Mammary epithelial cell (primary cell): ENCODE measurements at regions of chr6 and their contacts with region 1.

Region 1: GRCh38 chr6:17987576-17988421 is at the start of gene KIF13A:
- DNase-seq: peak; percentile 58
- H3K4me3 ChIP-seq: peak within 1 kb of the TSS; percentile 82 to 96 (median 91)
- H3K27ac ChIP-seq: peak within 1 kb of the TSS; percentile 80
- H3K4me1 ChIP-seq: peaks cover 28% of the 10 kb centered on the region
- H3K27me3 ChIP-seq: no peaks in the 10 kb centered on the region
- CTCF ChIP-seq: peak in 1 of 2 donors; percentile 22
- total RNA-seq, gene KIF13A: 71.2 to 85.5 TPM

Region 2: GRCh38 chr6:17808609-17809008 is 179.2 kb before region 1 on chr6:
- CTCF ChIA-PET with region 1: no interaction called
- dilution Hi-C with region 1: no loop called
- in situ Hi-C with region 1: no loop called
- intact Hi-C with region 1: no loop called
- DNase-seq: no peak
- H3K4me3 ChIP-seq: no peak overlapping the region
- H3K27ac ChIP-seq: no peak overlapping the region
- H3K4me1 ChIP-seq: no peaks in the 10 kb centered on the region
- H3K27me3 ChIP-seq: no peaks in the 10 kb centered on the region
- CTCF ChIP-seq: no peak

Region 3: GRCh38 chr6:17907406-17908229 is 80.2 kb before region 1 on chr6:
- CTCF ChIA-PET with region 1: no interaction called
- dilution Hi-C with region 1: no loop called
- in situ Hi-C with region 1: no loop called
- intact Hi-C with region 1: loop called (anchors 2 kb)
- DNase-seq: peak; percentile 98
- H3K4me3 ChIP-seq: no peak overlapping the region
- H3K27ac ChIP-seq: peak overlapping the region; percentile 85
- H3K4me1 ChIP-seq: peaks cover 27% of the 10 kb centered on the region
- H3K27me3 ChIP-seq: no peaks in the 10 kb centered on the region
- CTCF ChIP-seq: peak; percentile 35 to 54

Region 4: DNA sequence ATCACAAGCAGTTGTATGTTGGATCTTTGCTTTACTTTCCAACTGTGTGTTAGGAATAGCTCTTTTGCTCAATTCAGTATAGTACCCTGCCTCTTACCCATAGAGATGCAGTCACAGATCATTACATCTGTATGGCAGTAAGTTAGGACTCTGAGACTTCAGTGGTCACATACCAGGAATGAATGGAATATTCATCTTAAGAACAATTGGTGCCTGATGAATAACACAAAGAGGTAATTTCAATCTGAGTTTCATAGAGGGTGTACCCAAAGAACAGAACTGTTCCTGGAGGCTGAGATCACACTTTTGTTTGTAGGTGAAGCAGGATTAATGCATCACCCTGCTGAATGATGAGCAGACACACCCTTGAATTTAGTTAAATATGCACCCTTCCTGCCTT is 28.3 kb after region 1 on chr6:
- CTCF ChIA-PET with region 1: interaction called, 6 read pairs
- dilution Hi-C with region 1: no loop called
- in situ Hi-C with region 1: no loop called
- intact Hi-C with region 1: loop called (anchors 1 kb)
- DNase-seq: peak; percentile 89
- H3K4me3 ChIP-seq: no peak overlapping the region
- H3K27ac ChIP-seq: peak overlapping the region; percentile 100
- H3K4me1 ChIP-seq: peaks cover 36% of the 10 kb centered on the region
- H3K27me3 ChIP-seq: no peaks in the 10 kb centered on the region
- CTCF ChIP-seq: no peak

Region 5: DNA sequence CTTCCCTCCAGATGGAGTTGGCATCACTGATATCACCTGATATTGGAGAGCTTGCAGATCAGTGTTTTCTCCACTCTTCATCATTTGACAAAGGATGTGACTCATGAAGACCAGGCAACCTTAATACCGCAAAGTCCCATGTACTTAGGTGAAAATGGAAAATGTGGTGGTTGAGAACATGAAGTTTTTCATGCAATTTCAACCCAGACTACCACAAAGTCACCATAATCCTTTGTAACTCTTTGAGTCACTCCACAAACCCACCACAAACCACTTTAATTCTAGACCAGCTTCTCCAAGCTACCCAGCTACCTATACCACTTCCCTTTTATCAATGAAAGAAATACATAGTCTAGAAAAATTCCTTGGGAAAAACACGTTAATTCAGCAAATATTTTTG is 127.6 kb after region 1 on chr6:
- CTCF ChIA-PET with region 1: no interaction called
- dilution Hi-C with region 1: no loop called
- in situ Hi-C with region 1: loop called (anchors 5 to 10 kb)
- intact Hi-C with region 1: no loop called
- DNase-seq: peak; percentile 79
- H3K4me3 ChIP-seq: no peak overlapping the region
- H3K27ac ChIP-seq: no peak overlapping the region
- H3K4me1 ChIP-seq: no peaks in the 10 kb centered on the region
- H3K27me3 ChIP-seq: no peaks in the 10 kb centered on the region
- CTCF ChIP-seq: no peak